Psoas muscle (tissue), 8 donors: ENCODE measurements at regions of chr9 and their contacts with region 1.

Region 1: DNA sequence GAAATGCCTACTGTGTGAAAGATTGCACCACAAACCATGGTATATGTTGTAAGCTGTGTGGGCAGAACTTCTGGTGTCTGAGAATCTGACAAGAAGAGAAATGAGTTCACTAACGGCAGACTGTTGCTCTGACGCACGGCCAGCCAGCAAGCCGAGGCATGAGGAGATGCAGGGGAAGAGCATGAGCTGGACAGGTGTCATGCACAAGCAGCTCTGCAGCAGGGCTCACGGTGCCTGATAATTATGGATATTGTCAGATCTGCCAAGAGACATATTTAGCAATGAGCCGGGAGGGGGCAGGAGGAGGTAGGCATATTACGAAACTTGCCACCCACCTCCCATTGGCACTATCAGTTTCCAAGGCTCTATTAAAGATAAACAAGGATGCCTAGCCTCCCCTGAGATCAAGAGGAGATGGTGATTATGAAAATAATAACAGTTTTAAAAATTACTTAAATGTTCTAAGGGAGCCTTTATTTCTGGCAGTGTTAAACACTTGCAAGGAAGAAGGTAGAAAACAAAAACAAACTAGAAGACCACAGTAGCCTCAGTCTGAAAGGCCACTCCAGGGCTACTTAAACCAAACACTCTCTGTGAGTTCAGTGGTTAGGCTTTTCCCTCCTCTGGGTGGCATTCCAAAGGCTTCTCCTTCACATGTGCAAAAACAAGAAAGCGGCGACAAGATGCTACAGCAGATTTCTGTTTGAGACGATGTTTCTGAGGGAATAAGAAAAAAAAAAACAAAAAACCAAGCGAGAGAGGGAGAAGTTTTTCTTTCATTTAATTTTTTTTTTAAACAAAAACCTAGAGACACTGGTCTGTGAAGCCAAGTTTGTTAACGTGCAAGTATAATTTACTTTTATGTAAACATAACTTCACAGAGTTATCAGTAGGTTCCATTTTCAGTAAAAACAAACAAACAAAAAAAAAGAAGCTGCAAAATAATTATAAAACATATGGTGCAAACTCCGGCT is 339.5 kb downstream of the BNC2 start:
- DNase-seq: peak; percentile 43 to 85
- ATAC-seq: peak; percentile 96 to 98 (median 96)
- H3K4me3 ChIP-seq: peak overlapping the region; percentile 9
- H3K27ac ChIP-seq: peak overlapping the region; percentile 70
- H3K4me1 ChIP-seq: peaks cover 10% of the 10 kb centered on the region
- H3K27me3 ChIP-seq: no peaks in the 10 kb centered on the region
- CTCF ChIP-seq: no peak

Region 2: DNA sequence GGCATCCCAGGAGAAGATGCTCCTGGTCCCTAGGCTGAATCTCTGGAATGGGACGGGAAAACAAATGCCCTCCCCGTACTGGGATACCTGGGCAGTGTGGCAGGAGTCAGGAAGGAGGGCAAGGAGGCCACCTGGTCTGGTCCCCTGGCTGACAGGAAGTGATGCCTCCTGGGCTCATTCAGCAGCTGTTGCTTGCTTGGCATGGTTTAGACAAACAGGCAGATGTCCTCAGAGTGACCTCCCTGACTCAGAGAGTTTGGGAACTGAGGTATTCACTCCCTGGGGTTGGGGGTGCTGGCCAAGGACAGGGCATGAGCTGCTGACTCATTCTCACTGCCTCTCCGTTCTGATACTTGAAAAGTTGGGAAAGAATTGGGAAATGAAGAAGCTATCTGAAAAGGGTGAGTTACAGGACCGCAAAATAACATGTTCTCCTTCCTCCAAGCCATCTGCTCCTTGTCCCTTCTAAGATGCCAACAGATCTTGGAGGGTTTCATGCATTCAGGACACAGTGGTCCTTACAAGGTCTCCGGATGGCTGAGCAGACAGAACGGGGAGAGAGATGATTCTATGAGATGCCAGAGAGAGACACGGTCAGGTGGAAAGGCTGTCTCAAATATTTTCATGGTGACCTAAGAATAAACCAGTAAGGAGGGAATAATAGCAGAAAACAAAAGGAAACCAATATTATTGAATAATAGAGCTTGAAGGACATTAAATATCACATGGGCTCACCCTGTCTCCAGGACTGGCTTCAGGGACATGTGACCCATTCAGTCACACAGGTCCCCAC is 195.0 kb before region 1 on chr9:
- intact Hi-C with region 1: loop called in 1 of 2 experiments (anchors 5 kb)
- DNase-seq: peak; percentile 84 to 89
- ATAC-seq: peak; percentile 86 to 94 (median 92)
- H3K4me3 ChIP-seq: no peak overlapping the region
- H3K27ac ChIP-seq: peak overlapping the region; percentile 61
- H3K4me1 ChIP-seq: peaks cover 3% of the 10 kb centered on the region
- H3K27me3 ChIP-seq: no peaks in the 10 kb centered on the region
- CTCF ChIP-seq: no peak

Region 3: DNA sequence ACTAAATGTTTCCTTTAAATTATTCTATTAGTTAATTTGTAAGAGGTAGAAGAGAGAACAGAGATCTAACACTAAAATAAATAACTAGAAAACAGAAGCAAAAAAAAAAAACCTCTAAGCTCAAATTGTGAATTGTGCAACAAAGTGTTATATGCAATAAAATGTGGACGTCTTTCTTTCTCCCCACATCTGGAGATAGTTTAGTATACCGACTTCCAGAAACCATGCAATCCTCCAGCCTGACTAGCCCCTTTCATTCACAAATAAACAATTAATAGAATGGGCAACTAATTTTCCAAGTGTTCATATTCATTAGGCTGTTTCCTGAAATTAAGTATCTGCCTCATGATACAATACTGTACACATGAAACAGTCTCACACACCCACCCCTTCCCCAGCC is 81.0 kb after region 1 on chr9:
- intact Hi-C with region 1: no loop called
- DNase-seq: no peak
- ATAC-seq: no peak
- H3K4me3 ChIP-seq: no peak overlapping the region
- H3K27ac ChIP-seq: no peak overlapping the region
- H3K4me1 ChIP-seq: no peaks in the 10 kb centered on the region
- H3K27me3 ChIP-seq: no peaks in the 10 kb centered on the region
- CTCF ChIP-seq: no peak

Region 4: DNA sequence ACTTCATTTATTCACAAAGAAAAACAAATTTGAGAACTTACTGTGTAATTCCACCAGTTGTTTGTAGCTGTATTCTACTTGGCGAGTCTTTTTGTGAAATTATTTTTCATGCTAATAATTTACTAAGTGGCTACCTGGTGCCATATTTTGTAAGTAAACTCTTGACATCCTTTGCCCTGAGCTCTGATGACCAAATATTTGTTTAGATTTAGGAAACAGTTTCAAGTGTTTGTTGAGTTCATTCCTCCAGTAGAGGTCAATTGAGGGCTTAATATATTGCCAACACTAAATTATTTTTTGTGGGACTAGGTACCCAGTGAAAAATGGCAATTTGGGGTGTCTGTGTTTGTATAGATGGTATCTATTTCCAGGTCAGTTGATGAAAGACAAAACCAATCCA is 607.6 kb after region 1 on chr9:
- intact Hi-C with region 1: no loop called
- DNase-seq: no peak
- ATAC-seq: no peak
- H3K4me3 ChIP-seq: no peak overlapping the region
- H3K27ac ChIP-seq: no peak overlapping the region
- H3K4me1 ChIP-seq: peaks cover 9% of the 10 kb centered on the region
- H3K27me3 ChIP-seq: no peaks in the 10 kb centered on the region
- CTCF ChIP-seq: no peak